ENCODE measurements at regions of chr19 and their contacts with region 1.

Region 1: DNA sequence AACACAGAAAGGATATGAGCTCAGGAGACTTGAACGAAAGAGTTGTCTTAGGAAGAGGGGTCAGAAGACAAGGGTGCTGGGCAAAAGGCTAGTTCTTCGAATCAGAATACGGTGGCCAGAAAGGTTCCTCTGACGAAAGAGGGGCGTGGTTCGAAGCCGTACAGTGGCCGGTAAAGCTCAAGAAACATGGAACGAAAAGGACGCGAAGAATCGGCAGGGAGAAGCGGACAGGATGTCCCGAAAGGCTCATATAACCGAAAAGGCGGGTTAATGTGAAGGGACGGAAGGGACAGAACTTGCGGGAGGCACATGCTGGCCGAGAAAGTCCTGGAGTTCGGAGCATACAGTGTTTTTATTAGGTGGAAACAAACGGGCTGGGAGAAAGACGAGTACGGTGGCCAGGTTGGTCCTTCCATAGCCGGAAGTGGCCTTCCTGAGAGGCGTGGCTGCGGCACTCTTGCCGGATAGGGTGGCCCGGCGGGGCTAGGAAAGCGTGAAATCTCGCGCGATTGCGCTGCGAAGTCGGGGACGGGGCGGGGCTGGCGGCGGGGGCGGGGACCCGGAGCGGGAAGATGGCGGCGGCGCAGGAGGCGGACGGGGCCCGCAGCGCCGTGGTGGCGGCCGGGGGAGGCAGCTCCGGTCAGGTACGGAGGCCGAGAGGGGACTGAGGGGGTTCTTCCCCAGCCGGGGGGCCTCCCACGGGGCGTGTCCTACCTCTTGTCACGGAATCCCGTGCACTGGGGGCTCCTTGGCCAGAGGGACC is at the start of gene CLPTM1:
- DNase-seq: peak; percentile 97 to 99 (median 99)
- H3K4me3 ChIP-seq: peak within 1 kb of the TSS; percentile 72 to 100 (median 97)
- H3K27ac ChIP-seq: peak within 1 kb of the TSS; percentile 91 to 95
- H3K4me1 ChIP-seq: peaks cover 14 to 36% (median 30%) of the 10 kb centered on the region in 4 experiments
- H3K27me3 ChIP-seq: no peaks in the 10 kb centered on the region

Region 2: DNA sequence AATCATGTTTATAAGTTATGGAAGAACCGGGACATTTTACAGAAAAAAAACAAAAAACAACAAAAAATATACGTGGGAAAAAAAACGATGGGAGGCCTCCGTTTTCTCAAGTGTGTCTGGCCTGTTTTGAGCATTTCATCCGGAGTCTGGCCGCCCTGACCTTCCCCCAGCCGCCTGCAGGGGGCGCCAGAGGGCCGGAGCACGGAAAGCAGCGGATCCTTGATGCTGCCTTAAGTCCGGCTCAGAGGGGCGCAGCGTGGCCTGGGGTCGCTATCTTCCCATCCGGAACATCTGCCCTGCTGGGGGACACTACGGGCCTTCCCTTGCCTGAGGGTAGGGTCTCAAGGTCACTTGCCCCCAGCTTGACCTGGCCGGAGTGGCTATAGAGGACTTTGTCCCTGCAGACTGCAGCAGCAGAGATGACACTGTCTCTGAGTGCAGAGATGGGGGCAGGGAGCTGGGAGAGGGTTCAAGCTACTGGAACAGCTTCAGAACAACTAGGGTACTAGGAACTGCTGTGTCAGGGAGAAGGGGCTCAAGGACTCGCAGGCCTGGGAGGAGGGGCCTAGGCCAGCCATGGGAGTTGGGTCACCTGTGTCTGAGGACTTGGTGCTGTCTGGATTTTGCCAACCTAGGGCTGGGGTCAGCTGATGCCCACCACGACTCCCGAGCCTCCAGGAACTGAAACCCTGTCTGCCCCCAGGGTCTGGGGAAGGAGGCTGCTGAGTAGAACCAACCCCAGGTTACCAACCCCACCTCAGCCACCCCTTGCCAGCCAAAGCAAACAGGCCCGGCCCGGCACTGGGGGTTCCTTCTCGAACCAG is 51.2 kb before region 1 on chr19:
- CTCF ChIA-PET with region 1: interaction called, 102 read pairs
- POLR2A ChIA-PET with region 1: no interaction called
- DNase-seq: peak; percentile 49 to 73 (median 70)
- H3K4me3 ChIP-seq: no peak overlapping the region
- H3K27ac ChIP-seq: no peak overlapping the region
- H3K4me1 ChIP-seq: peaks cover 0 to 13% (median 10%) of the 10 kb centered on the region in 4 experiments
- H3K27me3 ChIP-seq: peaks cover 0 to 23% (median 4%) of the 10 kb centered on the region in 5 experiments

Region 3: GRCh38 chr19:44912854-44913253 is 42.2 kb before region 1 on chr19:
- CTCF ChIA-PET with region 1: interaction called, 72 read pairs
- POLR2A ChIA-PET with region 1: no interaction called
- DNase-seq: no peak
- H3K4me3 ChIP-seq: no peak overlapping the region
- H3K27ac ChIP-seq: no peak overlapping the region
- H3K4me1 ChIP-seq: peaks cover 0 to 35% (median 21%) of the 10 kb centered on the region in 4 experiments
- H3K27me3 ChIP-seq: no peaks in the 10 kb centered on the region

Region 4: GRCh38 chr19:44925114-44925891 is 29.7 kb before region 1 on chr19:
- CTCF ChIA-PET with region 1: interaction called, 10 read pairs
- POLR2A ChIA-PET with region 1: no interaction called
- DNase-seq: peak; percentile 39 to 84 (median 82)
- H3K4me3 ChIP-seq: peak overlapping the region in 2 of 7 experiments; percentile 7 to 16
- H3K27ac ChIP-seq: no peak overlapping the region
- H3K4me1 ChIP-seq: peaks cover 0 to 30% (median 28%) of the 10 kb centered on the region in 4 experiments
- H3K27me3 ChIP-seq: no peaks in the 10 kb centered on the region

Region 5: DNA sequence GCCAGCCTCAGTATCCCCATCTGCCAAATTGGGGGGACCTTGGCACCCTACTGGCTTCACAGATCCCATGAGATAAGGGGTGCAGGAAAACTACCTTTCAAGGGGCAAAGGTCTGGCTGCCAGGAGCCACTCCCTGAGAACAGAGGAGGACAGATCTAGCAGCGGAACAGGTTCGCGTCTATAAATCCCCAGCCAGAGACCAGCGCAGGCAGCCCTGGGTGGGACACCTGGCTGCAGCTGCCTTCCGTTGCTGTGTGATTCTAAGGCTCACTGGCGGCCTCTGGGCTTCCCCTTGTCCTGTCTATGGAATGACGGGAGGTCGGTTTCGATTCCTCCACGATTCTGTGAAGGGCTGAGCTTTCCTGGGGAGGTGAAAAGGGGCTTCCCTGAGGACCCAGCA is 53.5 kb after region 1 on chr19:
- CTCF ChIA-PET with region 1: no interaction called
- POLR2A ChIA-PET with region 1: no interaction called
- DNase-seq: no peak
- H3K4me3 ChIP-seq: no peak overlapping the region
- H3K27ac ChIP-seq: no peak overlapping the region
- H3K4me1 ChIP-seq: no peaks in the 10 kb centered on the region
- H3K27me3 ChIP-seq: no peaks in the 10 kb centered on the region

Measured in common myeloid progenitor, CD34-positive (primary cell).